MCF 10A (cell line): ENCODE measurements at regions of chr2 and their contacts with region 1.

Region 1: GRCh38 chr2:237512774-237513466 is 25.9 kb downstream of the MLPH start:
- DNase-seq: peak; percentile 90
- H3K4me3 Mint-ChIP-seq: no peak overlapping the region
- H3K27ac Mint-ChIP-seq: no peak overlapping the region
- H3K4me1 Mint-ChIP-seq: no peaks in the 10 kb centered on the region
- H3K27me3 Mint-ChIP-seq: no peaks in the 10 kb centered on the region
- CTCF ChIP-seq: peak; percentile 86

Region 2: GRCh38 chr2:237122214-237122666 is 390.7 kb before region 1 on chr2:
- CTCF ChIA-PET with region 1: interaction called, 15 read pairs
- POLR2A ChIA-PET with region 1: no interaction called
- intact Hi-C with region 1: no loop called
- DNase-seq: peak; percentile 82
- H3K4me3 Mint-ChIP-seq: no peak overlapping the region
- H3K27ac Mint-ChIP-seq: peak overlapping the region; percentile 82
- H3K4me1 Mint-ChIP-seq: peaks cover 25% of the 10 kb centered on the region
- H3K27me3 Mint-ChIP-seq: no peaks in the 10 kb centered on the region
- CTCF ChIP-seq: peak; percentile 80

Region 3: DNA sequence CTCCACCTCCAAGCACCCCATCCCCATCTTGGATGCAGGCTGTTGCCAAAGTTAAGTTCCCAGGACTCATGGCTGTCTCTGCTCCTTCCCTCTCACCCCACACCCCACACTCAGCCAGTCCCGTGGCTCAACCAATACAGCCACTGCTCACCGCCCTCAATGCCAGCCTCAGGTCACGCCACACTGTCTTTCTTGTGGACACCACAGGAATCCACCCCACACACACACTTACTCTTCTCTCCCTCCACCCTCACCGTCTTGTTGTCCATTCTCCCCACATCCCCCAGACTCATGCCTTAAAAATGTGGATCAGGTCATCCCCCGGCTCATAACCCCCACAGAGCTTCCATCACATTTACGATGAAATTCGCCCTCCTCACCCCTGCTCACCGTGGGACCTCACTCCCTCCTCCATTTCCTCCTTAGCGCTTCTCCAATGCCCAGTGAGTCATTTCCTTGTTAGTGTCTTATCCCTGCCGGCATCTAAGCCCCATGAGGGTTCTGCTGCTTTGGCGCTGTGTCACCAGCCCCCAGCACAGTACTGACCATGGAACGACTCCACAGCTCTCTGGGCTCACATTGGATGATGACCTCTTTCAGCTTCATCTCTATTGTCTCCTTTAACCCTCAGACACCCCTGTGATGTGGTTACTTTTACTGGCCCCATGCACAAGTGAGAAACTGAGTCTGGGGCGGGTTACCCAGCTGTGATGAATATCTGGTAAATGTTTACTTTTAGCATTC is 12.1 kb before region 1 on chr2:
- CTCF ChIA-PET with region 1: interaction called, 30 read pairs
- POLR2A ChIA-PET with region 1: interaction called, 3 read pairs
- intact Hi-C with region 1: no loop called
- DNase-seq: peak; percentile 89
- H3K4me3 Mint-ChIP-seq: peak overlapping the region; percentile 14
- H3K27ac Mint-ChIP-seq: peak overlapping the region; percentile 70
- H3K4me1 Mint-ChIP-seq: peaks cover 31% of the 10 kb centered on the region
- H3K27me3 Mint-ChIP-seq: no peaks in the 10 kb centered on the region
- CTCF ChIP-seq: no peak

Region 4: GRCh38 chr2:237553948-237554347 is 41.0 kb after region 1 on chr2:
- CTCF ChIA-PET with region 1: interaction called, 21 read pairs
- POLR2A ChIA-PET with region 1: interaction called, 7 read pairs
- intact Hi-C with region 1: no loop called
- DNase-seq: no peak
- H3K4me3 Mint-ChIP-seq: no peak overlapping the region
- H3K27ac Mint-ChIP-seq: no peak overlapping the region
- H3K4me1 Mint-ChIP-seq: peaks cover 12% of the 10 kb centered on the region
- H3K27me3 Mint-ChIP-seq: no peaks in the 10 kb centered on the region
- CTCF ChIP-seq: no peak

Region 5: GRCh38 chr2:237566401-237567235 is 53.7 kb after region 1 on chr2 and contains the start of gene PRLH:
- CTCF ChIA-PET with region 1: interaction called, 239 read pairs
- POLR2A ChIA-PET with region 1: interaction called, 25 read pairs
- intact Hi-C with region 1: no loop called
- DNase-seq: no peak
- H3K4me3 Mint-ChIP-seq: no peak within 1 kb of the TSS
- H3K27ac Mint-ChIP-seq: no peak within 1 kb of the TSS
- H3K4me1 Mint-ChIP-seq: peaks cover under 1% of the 10 kb centered on the region
- H3K27me3 Mint-ChIP-seq: peaks cover 11% of the 10 kb centered on the region
- CTCF ChIP-seq: no peak
- total RNA-seq, gene PRLH: not detected in 2 replicates

Region 6: DNA sequence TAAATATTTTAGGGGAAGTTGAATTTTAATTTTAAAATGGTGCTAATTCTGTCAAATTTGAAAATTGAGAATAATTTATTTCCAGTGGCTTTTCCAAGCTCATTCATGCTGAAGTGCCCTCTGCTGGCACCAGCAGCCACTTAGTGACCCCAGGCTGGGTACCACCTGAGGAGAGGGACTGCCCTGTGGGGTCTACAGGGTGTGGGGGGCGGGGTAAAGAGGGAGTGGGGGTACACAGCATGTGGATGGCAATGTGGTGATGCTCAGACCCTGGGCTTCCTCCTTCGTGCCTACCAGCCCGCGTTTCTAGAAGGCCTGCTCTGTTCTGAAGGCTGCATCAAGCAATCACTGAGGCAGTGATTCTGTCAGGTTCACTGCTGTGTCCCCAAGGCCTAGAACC is 502.8 kb after region 1 on chr2:
- CTCF ChIA-PET with region 1: no interaction called
- POLR2A ChIA-PET with region 1: no interaction called
- intact Hi-C with region 1: loop called (anchors 10 kb)
- DNase-seq: no peak
- H3K4me3 Mint-ChIP-seq: no peak overlapping the region
- H3K27ac Mint-ChIP-seq: no peak overlapping the region
- H3K4me1 Mint-ChIP-seq: peaks cover 7% of the 10 kb centered on the region
- H3K27me3 Mint-ChIP-seq: no peaks in the 10 kb centered on the region
- CTCF ChIP-seq: no peak

Region 7: GRCh38 chr2:238120463-238121298 is 607.8 kb after region 1 on chr2:
- CTCF ChIA-PET with region 1: no interaction called
- POLR2A ChIA-PET with region 1: no interaction called
- intact Hi-C with region 1: no loop called
- DNase-seq: no peak
- H3K4me3 Mint-ChIP-seq: no peak overlapping the region
- H3K27ac Mint-ChIP-seq: no peak overlapping the region
- H3K4me1 Mint-ChIP-seq: no peaks in the 10 kb centered on the region
- H3K27me3 Mint-ChIP-seq: peaks cover 25% of the 10 kb centered on the region
- CTCF ChIP-seq: no peak